CD8-positive, alpha-beta T cell (primary cell): ENCODE measurements at regions of chr12 and their contacts with region 1.

Region 1: GRCh38 chr12:118372541-118373495 is at the start of gene TAOK3:
- DNase-seq: peak; percentile 94 to 99 (median 96)
- ATAC-seq: peak; percentile 85
- H3K4me3 ChIP-seq: peak within 1 kb of the TSS; percentile 85 to 89
- H3K4me3 Mint-ChIP-seq: peak within 1 kb of the TSS; percentile 92
- H3K27ac ChIP-seq: peak within 1 kb of the TSS; percentile 67 to 73
- H3K27ac Mint-ChIP-seq: peak within 1 kb of the TSS; percentile 95
- H3K4me1 ChIP-seq: peaks cover 31% of the 10 kb centered on the region
- H3K4me1 Mint-ChIP-seq: peaks cover 54% of the 10 kb centered on the region
- H3K27me3 ChIP-seq: no peaks in the 10 kb centered on the region
- H3K27me3 Mint-ChIP-seq: no peaks in the 10 kb centered on the region
- CTCF ChIP-seq: no peak
- total RNA-seq, gene TAOK3: 46.5 to 47.3 TPM

Region 2: DNA sequence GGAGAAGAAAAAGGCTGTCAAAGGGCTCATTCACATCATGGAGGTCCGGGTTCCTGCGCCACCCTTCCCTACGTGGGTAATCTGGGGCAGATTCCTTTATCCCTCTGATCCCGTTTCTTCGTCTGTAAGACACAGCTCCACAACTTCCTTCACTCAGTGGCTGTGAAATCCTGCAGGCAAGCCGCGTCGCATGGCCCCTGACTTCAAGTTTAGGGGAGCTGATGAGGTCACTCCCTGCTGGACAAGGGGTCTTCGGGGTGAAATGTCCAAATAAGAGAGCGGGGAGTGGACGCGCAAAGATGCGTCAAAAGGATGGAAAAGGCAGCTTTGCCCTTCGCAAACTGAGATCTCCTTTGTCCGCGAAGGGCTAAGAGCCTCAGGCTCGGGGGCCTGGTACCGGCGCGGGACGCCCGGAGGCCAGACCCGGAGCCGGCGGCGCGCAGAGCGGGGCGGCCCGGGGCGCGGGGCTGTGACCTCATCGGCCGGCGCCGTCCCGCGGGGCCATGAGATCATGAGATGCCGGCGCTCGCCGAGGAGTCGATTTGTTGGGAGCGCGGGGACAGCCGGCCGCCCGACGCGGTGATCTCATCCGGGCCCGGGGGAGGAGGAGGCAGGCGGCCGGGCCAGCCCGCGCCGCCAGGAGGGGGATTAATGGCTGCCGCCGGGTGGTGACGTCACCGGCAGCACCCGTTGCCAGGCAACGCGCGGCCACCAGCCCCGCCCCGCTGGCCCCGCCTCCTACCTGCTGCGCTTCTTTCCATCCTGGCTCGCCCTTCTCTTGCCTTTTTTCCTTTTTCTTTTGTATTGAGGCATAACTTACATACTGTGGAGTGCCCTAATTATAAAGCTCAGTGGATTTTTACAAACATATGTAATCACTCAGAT is 1553.6 kb before region 1 on chr12:
- CTCF ChIA-PET with region 1: no interaction called
- POLR2A ChIA-PET with region 1: no interaction called
- intact Hi-C with region 1: loop called in 1 of 2 experiments (anchors 5 kb)
- DNase-seq: peak; percentile 82 to 96 (median 91)
- ATAC-seq: peak; percentile 88
- H3K4me3 ChIP-seq: peak overlapping the region; percentile 70 to 93
- H3K4me3 Mint-ChIP-seq: peak overlapping the region; percentile 89
- H3K27ac ChIP-seq: peak overlapping the region; percentile 83 to 95
- H3K27ac Mint-ChIP-seq: peak overlapping the region; percentile 96
- H3K4me1 ChIP-seq: peaks cover 18% of the 10 kb centered on the region
- H3K4me1 Mint-ChIP-seq: peaks cover 21% of the 10 kb centered on the region
- H3K27me3 ChIP-seq: peaks cover 0 to 2% of the 10 kb centered on the region in 2 experiments
- H3K27me3 Mint-ChIP-seq: peaks cover 2% of the 10 kb centered on the region
- CTCF ChIP-seq: no peak

Region 3: DNA sequence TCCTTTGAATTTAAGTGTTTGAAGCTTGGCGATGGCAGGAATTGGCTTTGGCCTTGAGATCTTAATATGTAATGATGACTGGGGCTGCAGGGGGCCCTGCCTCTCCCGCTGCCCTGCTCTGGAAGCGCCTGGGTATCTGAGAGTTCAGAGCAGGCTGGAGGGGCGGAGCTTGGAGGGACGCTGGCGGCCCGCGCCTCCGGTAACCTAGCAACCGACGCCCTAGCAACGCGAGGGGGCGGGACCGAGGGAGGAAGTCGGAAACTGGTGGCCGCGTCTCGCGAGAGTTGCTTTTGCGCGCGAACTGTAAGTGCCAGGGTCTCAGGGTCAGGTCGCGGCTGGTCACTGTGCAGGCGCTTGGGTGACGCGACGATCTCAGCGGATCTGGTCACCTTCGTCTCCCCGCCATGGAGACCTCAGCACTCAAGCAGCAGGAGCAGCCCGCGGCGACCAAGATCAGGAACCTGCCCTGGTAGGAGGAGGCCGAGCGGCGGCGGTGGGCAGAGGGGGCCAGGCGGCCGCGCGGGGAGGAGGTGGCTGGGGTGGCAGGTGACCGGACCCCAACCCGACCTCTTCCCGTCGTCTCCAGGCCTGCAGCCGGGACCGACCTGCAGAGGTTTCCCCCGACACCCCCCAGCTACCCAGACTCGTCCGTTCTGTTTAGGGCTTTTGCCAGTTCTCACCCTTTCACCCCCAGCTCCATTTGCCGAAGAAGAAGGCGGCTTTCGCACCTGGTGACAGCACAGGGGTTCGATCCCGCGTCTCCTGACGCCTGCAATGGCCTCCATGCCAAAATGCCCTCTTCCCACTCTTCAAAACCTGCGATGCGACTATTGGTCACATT is 356.2 kb before region 1 on chr12 and contains the start of gene RFC5:
- CTCF ChIA-PET with region 1: no interaction called
- POLR2A ChIA-PET with region 1: interaction called, 4 read pairs
- intact Hi-C with region 1: loop called (anchors 1 to 2 kb)
- DNase-seq: peak; percentile 94 to 99 (median 98)
- ATAC-seq: peak; percentile 97
- H3K4me3 ChIP-seq: peak within 1 kb of the TSS; percentile 88 to 98
- H3K4me3 Mint-ChIP-seq: peak within 1 kb of the TSS; percentile 90
- H3K27ac ChIP-seq: peak within 1 kb of the TSS in 1 of 2 experiments; percentile 58
- H3K27ac Mint-ChIP-seq: peak within 1 kb of the TSS; percentile 90
- H3K4me1 ChIP-seq: peaks cover 19% of the 10 kb centered on the region
- H3K4me1 Mint-ChIP-seq: peaks cover 18% of the 10 kb centered on the region
- H3K27me3 ChIP-seq: no peaks in the 10 kb centered on the region
- H3K27me3 Mint-ChIP-seq: no peaks in the 10 kb centered on the region
- CTCF ChIP-seq: no peak
- total RNA-seq, gene RFC5: 9.9 to 13.8 TPM

Region 4: DNA sequence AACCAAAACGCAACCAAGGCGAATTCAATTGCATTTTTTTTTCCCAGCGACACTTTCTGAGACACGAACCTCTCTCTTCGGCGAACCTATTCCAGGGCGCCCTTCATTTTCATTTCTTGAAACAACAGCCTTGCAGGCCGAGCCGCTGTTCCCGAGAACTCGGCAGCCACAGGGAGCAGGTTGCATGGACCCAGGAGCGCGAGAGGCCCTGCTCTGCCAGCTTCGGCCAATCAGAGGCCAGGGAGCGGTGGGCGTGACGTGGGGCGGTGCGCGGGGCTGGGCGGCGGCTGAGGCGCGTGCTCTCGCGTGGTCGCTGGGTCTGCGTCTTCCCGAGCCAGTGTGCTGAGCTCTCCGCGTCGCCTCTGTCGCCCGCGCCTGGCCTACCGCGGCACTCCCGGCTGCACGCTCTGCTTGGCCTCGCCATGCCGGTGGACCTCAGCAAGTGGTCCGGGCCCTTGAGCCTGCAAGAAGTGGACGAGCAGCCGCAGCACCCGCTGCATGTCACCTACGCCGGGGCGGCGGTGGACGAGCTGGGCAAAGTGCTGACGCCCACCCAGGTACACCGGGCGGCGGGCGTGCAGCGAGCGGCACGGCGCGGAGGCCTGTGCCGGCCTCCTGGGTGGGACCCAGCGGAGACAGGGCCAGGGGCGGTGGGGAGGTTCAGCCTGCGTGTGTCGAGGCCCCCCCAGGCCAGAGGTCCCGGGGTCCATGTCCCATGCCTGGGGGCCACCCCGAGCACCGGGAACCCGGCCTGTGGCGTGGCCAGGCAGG is 236.8 kb before region 1 on chr12 and contains the start of gene PEBP1:
- CTCF ChIA-PET with region 1: interaction called, 4 read pairs
- POLR2A ChIA-PET with region 1: interaction called, 15 read pairs
- intact Hi-C with region 1: loop called (anchors 1 kb)
- DNase-seq: peak; percentile 86 to 95 (median 93)
- ATAC-seq: peak; percentile 99
- H3K4me3 ChIP-seq: peak within 1 kb of the TSS; percentile 60 to 72
- H3K4me3 Mint-ChIP-seq: peak within 1 kb of the TSS; percentile 97
- H3K27ac ChIP-seq: peak within 1 kb of the TSS; percentile 47 to 78
- H3K27ac Mint-ChIP-seq: peak within 1 kb of the TSS; percentile 94
- H3K4me1 ChIP-seq: peaks cover 27% of the 10 kb centered on the region
- H3K4me1 Mint-ChIP-seq: peaks cover 33% of the 10 kb centered on the region
- H3K27me3 ChIP-seq: no peaks in the 10 kb centered on the region
- H3K27me3 Mint-ChIP-seq: no peaks in the 10 kb centered on the region
- CTCF ChIP-seq: no peak
- total RNA-seq, gene PEBP1: 91.2 to 91.6 TPM

Region 5: GRCh38 chr12:118307069-118307954 is 65.5 kb before region 1 on chr12:
- CTCF ChIA-PET with region 1: interaction called, 5 read pairs
- POLR2A ChIA-PET with region 1: no interaction called
- intact Hi-C with region 1: loop called in 1 of 2 experiments (anchors 1 kb)
- DNase-seq: peak in 2 of 9 experiments; percentile 13 to 20
- ATAC-seq: peak; percentile 20
- H3K4me3 ChIP-seq: no peak overlapping the region
- H3K4me3 Mint-ChIP-seq: peak overlapping the region; percentile 13
- H3K27ac ChIP-seq: peak overlapping the region in 1 of 2 experiments; percentile 41
- H3K27ac Mint-ChIP-seq: no peak overlapping the region
- H3K4me1 ChIP-seq: peaks cover under 1% of the 10 kb centered on the region
- H3K4me1 Mint-ChIP-seq: peaks cover 47% of the 10 kb centered on the region
- H3K27me3 ChIP-seq: no peaks in the 10 kb centered on the region
- H3K27me3 Mint-ChIP-seq: no peaks in the 10 kb centered on the region
- CTCF ChIP-seq: no peak

Region 6: DNA sequence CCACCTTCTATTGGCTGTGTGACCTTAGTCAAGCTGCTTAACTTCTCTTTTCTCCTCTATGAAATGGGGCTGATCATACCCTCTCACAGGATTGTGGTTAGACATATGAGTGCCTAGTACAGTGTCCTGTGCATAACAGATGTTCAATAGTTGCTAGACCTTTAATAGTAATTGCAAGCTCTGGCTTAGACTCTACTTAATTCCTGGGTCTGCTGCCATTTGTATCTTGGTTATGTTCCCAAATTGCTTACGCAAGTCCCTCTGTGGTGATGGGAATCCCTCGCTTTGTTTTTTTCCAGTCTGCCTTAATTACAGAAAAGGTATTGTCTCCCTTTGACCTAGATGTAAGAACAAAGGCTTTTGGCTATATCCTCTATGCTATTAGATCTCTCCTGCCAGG is 18.6 kb after region 1 on chr12:
- CTCF ChIA-PET with region 1: interaction called, 26 read pairs
- POLR2A ChIA-PET with region 1: no interaction called
- intact Hi-C with region 1: no loop called
- DNase-seq: no peak
- ATAC-seq: no peak
- H3K4me3 ChIP-seq: no peak overlapping the region
- H3K4me3 Mint-ChIP-seq: no peak overlapping the region
- H3K27ac ChIP-seq: no peak overlapping the region
- H3K27ac Mint-ChIP-seq: no peak overlapping the region
- H3K4me1 ChIP-seq: no peaks in the 10 kb centered on the region
- H3K4me1 Mint-ChIP-seq: no peaks in the 10 kb centered on the region
- H3K27me3 ChIP-seq: no peaks in the 10 kb centered on the region
- H3K27me3 Mint-ChIP-seq: no peaks in the 10 kb centered on the region
- CTCF ChIP-seq: no peak